CD4-positive, alpha-beta memory T cell (primary cell): ENCODE measurements at regions of chr15 and their contacts with region 1.

Region 1: GRCh38 chr15:65792130-65792987 is at the start of gene DENND4A:
- DNase-seq: peak; percentile 99
- H3K4me3 ChIP-seq: peak within 1 kb of the TSS; percentile 87 to 94
- H3K4me3 Mint-ChIP-seq: peak within 1 kb of the TSS; percentile 93 to 99 (median 96)
- H3K27ac ChIP-seq: peak within 1 kb of the TSS; percentile 97
- H3K27ac Mint-ChIP-seq: peak within 1 kb of the TSS; percentile 98 to 100 (median 99)
- H3K4me1 ChIP-seq: peaks cover 46% of the 10 kb centered on the region
- H3K4me1 Mint-ChIP-seq: peaks cover 29 to 60% (median 48%) of the 10 kb centered on the region in 4 donors
- H3K27me3 ChIP-seq: no peaks in the 10 kb centered on the region
- H3K27me3 Mint-ChIP-seq: no peaks in the 10 kb centered on the region
- total RNA-seq, gene DENND4A: 63.1 to 69.4 TPM

Region 2: GRCh38 chr15:65610871-65611718 is 181.3 kb before region 1 on chr15 and contains the start of gene INTS14:
- CTCF ChIA-PET with region 1: no interaction called
- POLR2A ChIA-PET with region 1: interaction called, 10 read pairs
- intact Hi-C with region 1: no loop called
- DNase-seq: peak; percentile 83 to 89 (median 84)
- H3K4me3 ChIP-seq: peak within 1 kb of the TSS; percentile 85 to 97
- H3K4me3 Mint-ChIP-seq: peak within 1 kb of the TSS; percentile 96 to 99 (median 98)
- H3K27ac ChIP-seq: peak within 1 kb of the TSS; percentile 76
- H3K27ac Mint-ChIP-seq: peak within 1 kb of the TSS; percentile 98 to 99 (median 99)
- H3K4me1 ChIP-seq: peaks cover 27% of the 10 kb centered on the region
- H3K4me1 Mint-ChIP-seq: peaks cover 21 to 49% (median 34%) of the 10 kb centered on the region in 4 donors
- H3K27me3 ChIP-seq: no peaks in the 10 kb centered on the region
- H3K27me3 Mint-ChIP-seq: no peaks in the 10 kb centered on the region
- total RNA-seq, gene INTS14: 35.3 to 40.3 TPM

Region 3: DNA sequence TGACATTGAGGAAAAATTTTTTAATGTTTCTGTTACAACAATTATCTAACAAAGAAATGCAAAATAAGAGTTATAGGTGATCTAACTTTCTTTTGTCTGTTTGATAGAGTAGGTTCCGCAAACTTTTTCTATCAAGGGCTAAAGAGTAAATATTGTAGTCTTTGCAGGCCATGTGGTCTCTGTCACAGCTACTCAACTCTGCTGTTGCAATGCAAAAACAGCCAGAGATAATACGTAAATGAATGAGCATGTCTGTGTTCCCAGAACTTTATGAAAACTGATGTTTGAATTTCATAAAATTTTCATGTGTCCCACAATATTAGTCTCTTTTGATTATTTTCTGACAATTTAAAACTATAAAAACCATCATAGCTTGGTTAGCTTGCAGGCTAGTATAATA is 97.3 kb before region 1 on chr15:
- CTCF ChIA-PET with region 1: no interaction called
- POLR2A ChIA-PET with region 1: no interaction called
- intact Hi-C with region 1: no loop called
- DNase-seq: no peak
- H3K4me3 ChIP-seq: no peak overlapping the region
- H3K4me3 Mint-ChIP-seq: no peak overlapping the region
- H3K27ac ChIP-seq: no peak overlapping the region
- H3K27ac Mint-ChIP-seq: no peak overlapping the region
- H3K4me1 ChIP-seq: no peaks in the 10 kb centered on the region
- H3K4me1 Mint-ChIP-seq: no peaks in the 10 kb centered on the region
- H3K27me3 ChIP-seq: no peaks in the 10 kb centered on the region
- H3K27me3 Mint-ChIP-seq: no peaks in the 10 kb centered on the region

Region 4: GRCh38 chr15:65766422-65767263 is 25.7 kb before region 1 on chr15:
- CTCF ChIA-PET with region 1: interaction called, 7 read pairs
- POLR2A ChIA-PET with region 1: interaction called, 26 read pairs
- intact Hi-C with region 1: no loop called
- DNase-seq: no peak
- H3K4me3 ChIP-seq: no peak overlapping the region
- H3K4me3 Mint-ChIP-seq: peak overlapping the region in 1 of 8 donors; percentile 16
- H3K27ac ChIP-seq: no peak overlapping the region
- H3K27ac Mint-ChIP-seq: peak overlapping the region in 4 of 7 donors; percentile 4 to 68 (median 46)
- H3K4me1 ChIP-seq: peaks cover 57% of the 10 kb centered on the region
- H3K4me1 Mint-ChIP-seq: peaks cover 43 to 67% (median 53%) of the 10 kb centered on the region in 4 donors
- H3K27me3 ChIP-seq: no peaks in the 10 kb centered on the region
- H3K27me3 Mint-ChIP-seq: no peaks in the 10 kb centered on the region

Region 5: GRCh38 chr15:65804252-65804931 is 12.0 kb after region 1 on chr15:
- CTCF ChIA-PET with region 1: interaction called, 4 read pairs
- POLR2A ChIA-PET with region 1: interaction called, 107 read pairs
- intact Hi-C with region 1: loop called (anchors 1 kb)
- DNase-seq: no peak
- H3K4me3 ChIP-seq: no peak overlapping the region
- H3K4me3 Mint-ChIP-seq: no peak overlapping the region
- H3K27ac ChIP-seq: no peak overlapping the region
- H3K27ac Mint-ChIP-seq: peak overlapping the region in 6 of 7 donors; percentile 48 to 91 (median 68)
- H3K4me1 ChIP-seq: peaks cover 41% of the 10 kb centered on the region
- H3K4me1 Mint-ChIP-seq: peaks cover 14 to 31% (median 26%) of the 10 kb centered on the region in 4 donors
- H3K27me3 ChIP-seq: no peaks in the 10 kb centered on the region
- H3K27me3 Mint-ChIP-seq: no peaks in the 10 kb centered on the region

Region 6: DNA sequence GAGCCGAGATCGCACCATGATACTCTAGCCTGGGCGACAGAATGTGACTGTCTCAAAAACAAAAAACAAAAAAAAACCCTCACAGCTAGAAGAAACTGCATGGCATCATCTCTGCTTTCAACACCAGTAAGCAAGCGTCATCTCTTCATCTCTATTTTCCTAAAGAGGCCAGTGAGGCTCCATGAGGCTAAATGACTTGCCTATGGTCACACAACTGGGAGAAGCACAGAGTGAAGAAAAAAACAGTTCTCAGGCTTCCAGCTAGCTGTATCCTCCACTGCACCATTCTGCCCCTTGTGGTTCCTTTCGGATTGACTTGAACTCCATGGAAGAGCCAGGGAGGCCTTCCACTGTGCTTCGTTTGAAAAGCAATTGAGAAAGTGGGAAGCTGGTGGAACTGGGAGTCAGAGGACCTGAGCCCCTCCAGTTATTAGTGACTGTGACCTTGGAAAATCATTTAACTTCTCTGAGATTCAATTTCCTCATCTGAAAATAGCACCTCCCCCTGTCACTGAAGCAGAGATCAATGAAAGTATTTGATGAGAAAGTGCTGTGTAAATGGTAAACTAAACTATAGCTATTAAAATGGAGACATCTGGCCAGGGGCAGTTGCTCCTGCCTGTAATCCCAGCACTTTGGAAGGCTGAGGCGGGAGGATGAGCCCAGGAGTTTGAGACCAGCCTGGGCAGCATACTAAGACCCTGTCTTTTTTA is 31.8 kb after region 1 on chr15:
- CTCF ChIA-PET with region 1: interaction called, 29 read pairs
- POLR2A ChIA-PET with region 1: interaction called, 144 read pairs
- intact Hi-C with region 1: loop called (anchors 1 kb)
- DNase-seq: no peak
- H3K4me3 ChIP-seq: no peak overlapping the region
- H3K4me3 Mint-ChIP-seq: peak overlapping the region in 3 of 8 donors; percentile 17 to 36 (median 35)
- H3K27ac ChIP-seq: no peak overlapping the region
- H3K27ac Mint-ChIP-seq: peak overlapping the region in 6 of 7 donors; percentile 37 to 68 (median 58)
- H3K4me1 ChIP-seq: peaks cover 78% of the 10 kb centered on the region
- H3K4me1 Mint-ChIP-seq: peaks cover 40 to 74% (median 57%) of the 10 kb centered on the region in 4 donors
- H3K27me3 ChIP-seq: no peaks in the 10 kb centered on the region
- H3K27me3 Mint-ChIP-seq: no peaks in the 10 kb centered on the region

Region 7: GRCh38 chr15:65856821-65857455 is 64.6 kb after region 1 on chr15:
- CTCF ChIA-PET with region 1: interaction called, 10 read pairs
- POLR2A ChIA-PET with region 1: interaction called, 3 read pairs
- intact Hi-C with region 1: loop called (anchors 1 kb)
- DNase-seq: peak; percentile 76 to 84 (median 77)
- H3K4me3 ChIP-seq: no peak overlapping the region
- H3K4me3 Mint-ChIP-seq: peak overlapping the region in 1 of 8 donors; percentile 32
- H3K27ac ChIP-seq: no peak overlapping the region
- H3K27ac Mint-ChIP-seq: peak overlapping the region in 4 of 7 donors; percentile 10 to 88 (median 49)
- H3K4me1 ChIP-seq: no peaks in the 10 kb centered on the region
- H3K4me1 Mint-ChIP-seq: peaks cover 9 to 13% (median 10%) of the 10 kb centered on the region in 4 donors
- H3K27me3 ChIP-seq: no peaks in the 10 kb centered on the region
- H3K27me3 Mint-ChIP-seq: no peaks in the 10 kb centered on the region